MCF 10A (cell line): ENCODE measurements at regions of chr12 and their contacts with region 1.

Region 1: GRCh38 chr12:104958009-104958945 is at the start of gene SLC41A2:
- DNase-seq: peak; percentile 95
- H3K4me3 Mint-ChIP-seq: peak within 1 kb of the TSS; percentile 91
- H3K27ac Mint-ChIP-seq: peak within 1 kb of the TSS; percentile 85
- H3K4me1 Mint-ChIP-seq: peaks cover 11% of the 10 kb centered on the region
- H3K27me3 Mint-ChIP-seq: no peaks in the 10 kb centered on the region
- CTCF ChIP-seq: peak; percentile 25
- total RNA-seq, gene SLC41A2: 14.6 and 15.9 TPM in 2 replicates

Region 2: GRCh38 chr12:104974616-104975290 is 16.5 kb after region 1 on chr12:
- CTCF ChIA-PET with region 1: interaction called, 7 read pairs
- POLR2A ChIA-PET with region 1: interaction called, 17 read pairs
- intact Hi-C with region 1: no loop called
- DNase-seq: peak; percentile 71
- H3K4me3 Mint-ChIP-seq: no peak overlapping the region
- H3K27ac Mint-ChIP-seq: peak overlapping the region; percentile 12
- H3K4me1 Mint-ChIP-seq: peaks cover 7% of the 10 kb centered on the region
- H3K27me3 Mint-ChIP-seq: no peaks in the 10 kb centered on the region
- CTCF ChIP-seq: no peak

Region 3: GRCh38 chr12:104986022-104986941 is 28.0 kb after region 1 on chr12 and contains the start of gene NOPCHAP1:
- CTCF ChIA-PET with region 1: interaction called, 6 read pairs
- POLR2A ChIA-PET with region 1: interaction called, 20 read pairs
- intact Hi-C with region 1: no loop called
- DNase-seq: peak; percentile 91
- H3K4me3 Mint-ChIP-seq: peak within 1 kb of the TSS; percentile 84
- H3K27ac Mint-ChIP-seq: peak within 1 kb of the TSS; percentile 43
- H3K4me1 Mint-ChIP-seq: peaks cover 30% of the 10 kb centered on the region
- H3K27me3 Mint-ChIP-seq: no peaks in the 10 kb centered on the region
- CTCF ChIP-seq: no peak
- total RNA-seq, gene NOPCHAP1: 17.4 and 33.3 TPM in 2 replicates